Calu3 (cell line): ENCODE measurements at regions of chr5 and their contacts with region 1.

Region 1: GRCh38 chr5:154749491-154749890 is 5.7 kb upstream of the LARP1 start:
- DNase-seq: no peak
- H3K4me3 Mint-ChIP-seq: no peak overlapping the region
- H3K27ac Mint-ChIP-seq: no peak overlapping the region
- H3K4me1 Mint-ChIP-seq: peaks cover 13% of the 10 kb centered on the region
- H3K27me3 Mint-ChIP-seq: no peaks in the 10 kb centered on the region
- CTCF ChIP-seq: no peak

Region 2: GRCh38 chr5:154729613-154730012 is 19.9 kb before region 1 on chr5:
- CTCF ChIA-PET with region 1: no interaction called
- intact Hi-C with region 1: loop called (anchors 2 kb)
- DNase-seq: peak; percentile 58
- H3K4me3 Mint-ChIP-seq: no peak overlapping the region
- H3K27ac Mint-ChIP-seq: peak overlapping the region; percentile 18
- H3K4me1 Mint-ChIP-seq: peaks cover 16% of the 10 kb centered on the region
- H3K27me3 Mint-ChIP-seq: no peaks in the 10 kb centered on the region
- CTCF ChIP-seq: no peak